Psoas muscle (tissue), 8 donors: ENCODE measurements at regions of chr10 and their contacts with region 1.

Region 1: GRCh38 chr10:94315024-94315451 is 47.7 kb downstream of the NOC3L start:
- DNase-seq: no peak
- ATAC-seq: no peak
- H3K4me3 ChIP-seq: no peak overlapping the region
- H3K27ac ChIP-seq: no peak overlapping the region
- H3K4me1 ChIP-seq: no peaks in the 10 kb centered on the region
- H3K27me3 ChIP-seq: no peaks in the 10 kb centered on the region
- CTCF ChIP-seq: no peak

Region 2: DNA sequence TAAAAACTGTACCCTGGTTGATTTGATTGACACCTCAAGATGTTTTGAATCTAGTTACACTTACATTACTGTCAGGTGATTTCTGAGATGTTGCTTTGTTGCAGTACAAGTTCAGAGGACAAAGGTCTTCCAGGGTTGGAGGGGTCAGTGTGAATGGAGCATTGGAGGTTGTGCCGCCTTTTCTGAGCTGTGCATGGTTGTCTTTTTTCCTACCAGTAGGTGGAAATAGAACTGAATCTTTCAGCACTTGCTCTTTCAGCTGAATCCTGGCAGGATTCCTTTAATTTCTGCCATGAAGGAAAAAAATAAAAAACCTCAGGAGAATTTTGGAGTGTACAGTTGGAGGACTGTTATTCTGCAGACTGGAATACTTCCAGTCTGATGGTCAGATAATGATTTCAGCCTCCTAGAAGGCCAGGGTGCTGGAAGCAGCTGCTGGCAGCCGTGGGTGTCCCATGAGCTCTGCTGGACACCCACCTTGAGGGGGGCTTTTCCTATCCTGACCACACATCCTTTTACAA is 238.7 kb before region 1 on chr10:
- intact Hi-C with region 1: loop called (anchors 5 to 10 kb)
- DNase-seq: no peak
- ATAC-seq: peak; percentile 56 to 86 (median 60)
- H3K4me3 ChIP-seq: no peak overlapping the region
- H3K27ac ChIP-seq: no peak overlapping the region
- H3K4me1 ChIP-seq: peaks cover 13% of the 10 kb centered on the region
- H3K27me3 ChIP-seq: no peaks in the 10 kb centered on the region
- CTCF ChIP-seq: peak; percentile 54

Region 3: DNA sequence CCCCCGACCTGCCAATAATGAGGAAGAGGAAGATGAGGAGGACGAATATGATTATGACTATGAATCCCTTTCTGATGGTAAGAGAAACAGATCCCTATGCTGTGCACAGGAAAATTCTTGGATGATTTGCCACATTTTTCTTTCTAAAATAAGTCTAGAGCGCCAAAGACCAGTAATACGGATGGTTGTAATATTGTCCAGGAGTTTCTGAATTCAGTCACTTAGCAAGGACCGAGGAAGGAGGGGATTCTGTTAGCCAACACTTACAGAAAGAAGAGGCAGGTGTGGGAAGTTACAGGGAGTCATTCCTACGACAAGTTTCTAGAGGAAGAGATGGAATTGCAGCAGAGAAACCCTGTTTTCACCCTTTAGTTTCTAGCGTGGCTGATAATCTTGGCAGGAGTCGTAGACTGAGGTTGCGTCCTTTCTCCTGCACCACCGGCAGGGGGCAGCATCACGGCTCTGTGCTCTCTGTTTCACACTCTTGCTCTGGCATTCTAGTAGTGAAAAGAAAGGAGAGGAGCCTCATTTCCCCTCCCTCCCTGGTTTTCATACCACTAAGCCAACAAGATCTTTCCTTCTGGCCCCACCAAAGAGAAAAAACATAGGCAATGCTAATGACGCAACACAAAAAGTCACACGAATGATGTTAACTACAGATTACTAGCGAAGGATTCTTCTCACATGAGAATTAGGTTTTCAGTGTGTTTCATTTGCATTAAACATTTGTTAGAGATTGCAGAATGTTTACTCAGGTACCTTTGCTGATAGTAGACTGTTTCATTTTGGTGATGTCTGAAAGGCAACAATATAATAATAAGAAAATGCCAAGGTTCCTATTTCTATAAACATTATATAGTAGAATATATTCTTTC is 35.0 kb before region 1 on chr10:
- intact Hi-C with region 1: loop called in 1 of 2 experiments (anchors 5 kb)
- DNase-seq: peak; percentile 44 to 70
- ATAC-seq: peak; percentile 68 to 94 (median 75)
- H3K4me3 ChIP-seq: no peak overlapping the region
- H3K27ac ChIP-seq: no peak overlapping the region
- H3K4me1 ChIP-seq: peaks cover 8% of the 10 kb centered on the region
- H3K27me3 ChIP-seq: no peaks in the 10 kb centered on the region
- CTCF ChIP-seq: peak; percentile 84